ENCODE measurements at regions of chr6 and their contacts with region 1.

Region 1: GRCh38 chr6:13641315-13641714 is 26.2 kb downstream of the NOL7 start:
- DNase-seq: no peak
- ATAC-seq: no peak
- H3K4me3 ChIP-seq: no peak overlapping the region
- H3K4me3 Mint-ChIP-seq: no peak overlapping the region
- H3K27ac ChIP-seq: no peak overlapping the region
- H3K27ac Mint-ChIP-seq: no peak overlapping the region
- H3K4me1 ChIP-seq: peaks cover under 1% of the 10 kb centered on the region
- H3K4me1 Mint-ChIP-seq: peaks cover 11% of the 10 kb centered on the region
- H3K27me3 ChIP-seq: no peaks in the 10 kb centered on the region
- H3K27me3 Mint-ChIP-seq: no peaks in the 10 kb centered on the region
- CTCF ChIP-seq: no peak

Region 2: DNA sequence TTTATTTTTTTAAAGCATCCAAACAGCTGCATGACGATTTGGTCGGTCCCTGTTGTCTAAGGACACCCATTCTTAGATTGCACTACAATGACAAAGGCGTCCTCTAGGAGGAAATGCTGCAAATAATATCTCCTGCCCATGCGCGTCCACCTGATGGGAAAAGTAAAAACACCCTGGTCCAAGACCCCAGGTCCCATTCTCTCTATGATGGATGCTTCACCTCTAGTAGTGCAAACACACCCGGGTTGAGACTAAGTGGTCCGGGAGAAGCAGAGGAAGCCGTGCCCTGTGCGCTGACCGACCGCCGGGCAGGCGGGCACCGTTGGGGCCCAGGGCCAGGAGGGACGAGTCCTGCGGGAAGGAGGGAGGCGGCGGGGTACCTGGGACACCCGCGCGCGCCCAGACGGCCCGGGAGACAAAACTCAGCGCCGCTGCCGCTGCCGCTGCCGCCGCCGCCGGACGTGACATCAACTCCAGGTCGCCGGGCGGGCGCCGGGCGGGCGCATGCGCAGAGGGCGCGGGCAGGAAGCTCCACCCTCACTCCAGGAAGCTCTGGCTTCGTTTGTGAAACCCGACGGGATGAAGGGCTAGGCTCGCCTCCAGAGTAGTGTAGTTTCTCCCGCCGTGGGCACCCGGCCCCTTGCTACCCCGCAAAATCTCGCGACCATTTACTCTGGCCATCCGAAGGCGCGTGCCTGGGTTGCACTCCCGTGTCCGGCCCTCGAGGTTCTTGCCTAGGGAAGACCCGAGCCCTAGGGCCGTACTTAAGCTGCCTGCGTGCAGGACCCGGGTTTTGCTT is 313.0 kb before region 1 on chr6 and contains the start of gene TBC1D7:
- CTCF ChIA-PET with region 1: no interaction called
- POLR2A ChIA-PET with region 1: no interaction called
- intact Hi-C with region 1: no loop called
- DNase-seq: peak; percentile 86 to 96 (median 91)
- ATAC-seq: peak; percentile 84
- H3K4me3 ChIP-seq: peak within 1 kb of the TSS; percentile 86 to 90
- H3K4me3 Mint-ChIP-seq: peak within 1 kb of the TSS; percentile 96
- H3K27ac ChIP-seq: peak within 1 kb of the TSS; percentile 81 to 95
- H3K27ac Mint-ChIP-seq: peak within 1 kb of the TSS; percentile 99
- H3K4me1 ChIP-seq: peaks cover 9% of the 10 kb centered on the region
- H3K4me1 Mint-ChIP-seq: peaks cover 22% of the 10 kb centered on the region
- H3K27me3 ChIP-seq: no peaks in the 10 kb centered on the region
- H3K27me3 Mint-ChIP-seq: no peaks in the 10 kb centered on the region
- CTCF ChIP-seq: no peak
- total RNA-seq, gene TBC1D7: 13.7 to 16.0 TPM

Region 3: DNA sequence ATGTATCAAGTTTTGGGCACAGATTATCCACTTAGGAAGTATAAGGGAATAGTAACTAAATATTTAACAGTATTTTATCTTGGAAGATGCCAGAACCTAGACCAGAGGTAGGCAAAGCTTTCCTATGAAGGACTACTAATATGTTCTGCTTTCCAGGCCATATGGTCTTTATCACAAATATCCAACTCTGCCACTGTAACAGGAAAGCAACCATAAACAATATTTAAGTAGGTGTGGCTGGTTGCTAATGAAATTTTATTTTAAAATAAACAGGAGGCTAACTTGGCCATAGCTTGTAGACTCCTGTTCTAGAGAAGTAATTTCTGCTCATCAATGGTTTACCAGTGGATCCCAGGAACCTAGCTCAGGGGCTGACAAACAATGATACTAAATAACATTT is 13.2 kb after region 1 on chr6:
- CTCF ChIA-PET with region 1: no interaction called
- POLR2A ChIA-PET with region 1: no interaction called
- intact Hi-C with region 1: loop called in 1 of 2 experiments (anchors 1 kb)
- DNase-seq: no peak
- ATAC-seq: no peak
- H3K4me3 ChIP-seq: no peak overlapping the region
- H3K4me3 Mint-ChIP-seq: no peak overlapping the region
- H3K27ac ChIP-seq: no peak overlapping the region
- H3K27ac Mint-ChIP-seq: no peak overlapping the region
- H3K4me1 ChIP-seq: no peaks in the 10 kb centered on the region
- H3K4me1 Mint-ChIP-seq: peaks cover 26% of the 10 kb centered on the region
- H3K27me3 ChIP-seq: no peaks in the 10 kb centered on the region
- H3K27me3 Mint-ChIP-seq: no peaks in the 10 kb centered on the region
- CTCF ChIP-seq: no peak

Region 4: GRCh38 chr6:13715444-13715883 is 74.1 kb after region 1 on chr6:
- CTCF ChIA-PET with region 1: no interaction called
- POLR2A ChIA-PET with region 1: no interaction called
- intact Hi-C with region 1: no loop called
- DNase-seq: peak in 1 of 9 experiments; percentile 17
- ATAC-seq: no peak
- H3K4me3 ChIP-seq: no peak overlapping the region
- H3K4me3 Mint-ChIP-seq: no peak overlapping the region
- H3K27ac ChIP-seq: no peak overlapping the region
- H3K27ac Mint-ChIP-seq: no peak overlapping the region
- H3K4me1 ChIP-seq: peaks cover 11% of the 10 kb centered on the region
- H3K4me1 Mint-ChIP-seq: peaks cover 19% of the 10 kb centered on the region
- H3K27me3 ChIP-seq: no peaks in the 10 kb centered on the region
- H3K27me3 Mint-ChIP-seq: no peaks in the 10 kb centered on the region
- CTCF ChIP-seq: no peak

Region 5: GRCh38 chr6:13725570-13725969 is 84.3 kb after region 1 on chr6:
- CTCF ChIA-PET with region 1: no interaction called
- POLR2A ChIA-PET with region 1: no interaction called
- intact Hi-C with region 1: no loop called
- DNase-seq: peak in 6 of 9 experiments; percentile 19 to 60 (median 51)
- ATAC-seq: peak; percentile 76
- H3K4me3 ChIP-seq: no peak overlapping the region
- H3K4me3 Mint-ChIP-seq: peak overlapping the region; percentile 44
- H3K27ac ChIP-seq: no peak overlapping the region
- H3K27ac Mint-ChIP-seq: peak overlapping the region; percentile 87
- H3K4me1 ChIP-seq: peaks cover 9% of the 10 kb centered on the region
- H3K4me1 Mint-ChIP-seq: peaks cover 25% of the 10 kb centered on the region
- H3K27me3 ChIP-seq: no peaks in the 10 kb centered on the region
- H3K27me3 Mint-ChIP-seq: no peaks in the 10 kb centered on the region
- CTCF ChIP-seq: no peak

Region 6: DNA sequence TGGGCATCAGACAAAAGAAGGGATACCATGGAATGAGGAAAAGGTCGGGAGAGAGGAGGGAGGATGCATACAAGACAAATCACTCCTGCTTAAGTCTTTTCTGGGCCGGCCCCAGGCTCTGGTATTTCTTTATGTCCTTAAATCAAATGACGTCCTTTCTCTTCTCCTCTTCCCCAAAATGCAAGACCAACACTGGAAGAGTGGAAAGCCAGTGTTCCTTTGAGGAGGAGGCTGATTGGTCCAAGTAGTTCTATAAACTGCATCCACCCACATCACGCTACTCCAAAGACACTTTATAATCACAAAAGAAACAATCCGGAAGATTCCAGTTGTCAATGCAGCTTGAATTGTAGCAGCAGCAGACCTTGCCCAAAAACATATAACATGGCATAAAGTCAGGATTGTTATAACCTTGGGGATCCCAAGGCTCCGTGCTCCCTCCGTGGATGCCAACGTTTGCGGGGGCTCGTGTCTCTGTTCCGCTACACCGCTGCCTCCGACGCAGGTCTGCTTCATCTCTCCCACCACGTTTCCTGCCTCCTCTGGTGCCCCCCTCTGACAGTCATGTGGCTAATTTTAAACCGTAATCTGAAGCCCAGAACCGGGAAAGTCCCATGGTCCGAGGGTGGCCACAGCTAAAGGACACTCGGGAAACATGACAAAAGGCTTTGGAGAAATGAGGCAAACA is 126.0 kb after region 1 on chr6:
- CTCF ChIA-PET with region 1: no interaction called
- POLR2A ChIA-PET with region 1: interaction called, 3 read pairs
- intact Hi-C with region 1: loop called in 1 of 2 experiments (anchors 5 kb)
- DNase-seq: peak; percentile 11 to 77 (median 53)
- ATAC-seq: peak; percentile 83
- H3K4me3 ChIP-seq: peak overlapping the region; percentile 16 to 21
- H3K4me3 Mint-ChIP-seq: peak overlapping the region; percentile 73
- H3K27ac ChIP-seq: no peak overlapping the region
- H3K27ac Mint-ChIP-seq: no peak overlapping the region
- H3K4me1 ChIP-seq: peaks cover 18% of the 10 kb centered on the region
- H3K4me1 Mint-ChIP-seq: peaks cover 33% of the 10 kb centered on the region
- H3K27me3 ChIP-seq: no peaks in the 10 kb centered on the region
- H3K27me3 Mint-ChIP-seq: no peaks in the 10 kb centered on the region
- CTCF ChIP-seq: peak; percentile 10

Measured in CD8-positive, alpha-beta T cell (primary cell).